Pancreas (tissue), 10 donors: ENCODE measurements at regions of chr6 and their contacts with region 1.

Region 1: DNA sequence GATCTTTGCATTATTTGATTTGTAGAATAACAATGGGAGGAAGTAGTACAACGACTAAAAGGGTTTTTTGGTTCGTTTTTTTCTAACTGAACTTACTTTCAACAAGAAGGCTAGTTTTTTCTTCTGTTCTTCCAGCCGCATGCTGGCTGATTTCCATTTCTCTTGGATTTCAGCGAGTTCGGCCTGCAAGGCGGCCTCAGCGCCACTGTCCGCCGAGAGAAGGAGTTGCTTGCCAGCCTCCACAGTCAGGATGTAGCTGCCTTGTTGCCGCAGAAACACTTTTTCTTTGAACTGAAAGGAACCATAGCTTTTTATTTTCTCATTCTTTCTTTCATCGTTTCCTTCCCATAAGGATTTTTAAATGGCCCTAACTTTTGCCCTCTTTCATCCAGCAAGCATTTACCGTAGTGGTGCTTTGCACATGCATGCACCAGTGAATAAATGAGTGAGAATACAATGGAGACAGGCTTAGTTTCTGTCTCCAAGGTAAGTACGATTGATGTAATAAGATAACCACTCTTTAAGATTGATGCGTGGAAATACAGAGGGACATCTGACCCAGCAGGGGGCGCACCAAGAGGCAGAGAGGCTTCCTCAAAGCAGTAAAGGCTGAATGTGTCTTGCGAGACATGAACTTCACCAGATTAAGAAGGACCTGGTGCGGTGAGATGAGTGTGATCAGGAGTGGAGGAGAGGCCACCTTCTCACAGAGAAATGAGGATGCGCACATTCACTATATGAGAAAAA is 398.8 kb downstream of the ESR1 start:
- DNase-seq: peak in 4 of 6 donors; percentile 18 to 70 (median 28)
- ATAC-seq: peak in 3 of 4 donors; percentile 38 to 69 (median 56)
- H3K4me3 ChIP-seq: no peak overlapping the region
- H3K27ac ChIP-seq: no peak overlapping the region
- H3K4me1 ChIP-seq: peaks cover 0 to 6% (median 0%) of the 10 kb centered on the region in 3 donors
- H3K27me3 ChIP-seq: no peaks in the 10 kb centered on the region
- CTCF ChIP-seq: peak in 3 of 4 donors; percentile 24 to 35 (median 30)

Region 2: GRCh38 chr6:152267967-152268845 is 62.0 kb after region 1 on chr6:
- intact Hi-C with region 1: loop called in 2 of 3 experiments (anchors 10 kb)
- DNase-seq: no peak
- ATAC-seq: peak in 3 of 4 donors; percentile 56 to 64 (median 57)
- H3K4me3 ChIP-seq: no peak overlapping the region
- H3K27ac ChIP-seq: no peak overlapping the region
- H3K4me1 ChIP-seq: peaks cover 5 to 8% (median 7%) of the 10 kb centered on the region in 3 donors
- H3K27me3 ChIP-seq: no peaks in the 10 kb centered on the region
- CTCF ChIP-seq: peak in 3 of 4 donors; percentile 16 to 34 (median 24)

Region 3: GRCh38 chr6:152458648-152459644 is 252.7 kb after region 1 on chr6:
- intact Hi-C with region 1: no loop called
- DNase-seq: no peak
- ATAC-seq: peak; percentile 54 to 87 (median 75)
- H3K4me3 ChIP-seq: no peak overlapping the region
- H3K27ac ChIP-seq: peak overlapping the region in 1 of 4 donors; percentile 42
- H3K4me1 ChIP-seq: peaks cover 0 to 3% (median 3%) of the 10 kb centered on the region in 3 donors
- H3K27me3 ChIP-seq: no peaks in the 10 kb centered on the region
- CTCF ChIP-seq: no peak